Left ventricle myocardium inferior (tissue), 1 donor: ENCODE measurements at regions of chr5 and their contacts with region 1.

Region 1: GRCh38 chr5:170420780-170421412 is 31.7 kb upstream of the KCNMB1 start:
- DNase-seq: peak; percentile 26
- H3K4me3 ChIP-seq: no peak overlapping the region
- H3K27ac ChIP-seq: no peak overlapping the region
- H3K4me1 ChIP-seq: peaks cover 16% of the 10 kb centered on the region
- H3K27me3 ChIP-seq: peaks cover 28% of the 10 kb centered on the region
- CTCF ChIP-seq: peak; percentile 84

Region 2: GRCh38 chr5:170100066-170100943 is 320.6 kb before region 1 on chr5:
- intact Hi-C with region 1: loop called (anchors 10 kb)
- DNase-seq: peak; percentile 57
- H3K4me3 ChIP-seq: no peak overlapping the region
- H3K27ac ChIP-seq: no peak overlapping the region
- H3K4me1 ChIP-seq: no peaks in the 10 kb centered on the region
- H3K27me3 ChIP-seq: peaks cover 7% of the 10 kb centered on the region
- CTCF ChIP-seq: peak; percentile 70

Region 3: GRCh38 chr5:170225326-170226128 is 195.4 kb before region 1 on chr5:
- intact Hi-C with region 1: loop called (anchors 5 kb)
- DNase-seq: peak; percentile 64
- H3K4me3 ChIP-seq: no peak overlapping the region
- H3K27ac ChIP-seq: no peak overlapping the region
- H3K4me1 ChIP-seq: peaks cover 11% of the 10 kb centered on the region
- H3K27me3 ChIP-seq: no peaks in the 10 kb centered on the region
- CTCF ChIP-seq: peak; percentile 85

Region 4: DNA sequence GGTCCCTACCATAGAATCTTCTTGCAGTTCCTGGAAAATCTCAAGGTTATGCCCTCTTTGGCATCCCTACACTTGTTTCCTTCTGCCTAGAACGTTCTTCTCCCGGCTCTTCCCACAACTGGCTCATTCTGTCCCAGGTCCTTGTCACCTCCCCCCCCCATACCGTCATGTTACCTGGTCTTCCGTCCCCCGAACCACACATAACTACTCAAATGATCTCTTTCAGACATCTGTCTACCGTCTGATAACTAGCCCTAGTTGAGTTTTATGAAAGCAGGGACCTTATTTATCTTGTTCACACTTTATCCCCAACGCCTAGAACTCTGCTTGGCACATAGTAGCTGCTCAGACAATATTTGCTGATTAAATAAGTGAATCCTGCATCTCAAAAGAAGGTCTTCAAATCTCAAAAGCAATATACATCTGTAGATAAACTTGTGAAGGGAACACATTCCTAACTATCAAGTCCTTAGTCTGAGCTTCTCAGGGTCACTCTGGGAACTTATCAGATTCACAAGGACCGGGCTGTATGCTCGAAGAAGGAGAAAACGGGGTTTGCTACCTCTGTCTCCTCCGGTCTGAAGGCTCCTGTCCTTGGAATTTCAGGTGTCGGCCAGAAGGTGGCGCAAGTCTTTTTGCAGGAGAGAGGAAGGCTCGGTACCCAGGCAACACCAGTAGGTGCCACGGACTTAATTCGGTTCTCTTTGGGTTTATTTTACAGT is 153.3 kb before region 1 on chr5:
- intact Hi-C with region 1: loop called (anchors 10 kb)
- DNase-seq: peak; percentile 69
- H3K4me3 ChIP-seq: peak overlapping the region; percentile 28
- H3K27ac ChIP-seq: peak overlapping the region; percentile 48
- H3K4me1 ChIP-seq: peaks cover 24% of the 10 kb centered on the region
- H3K27me3 ChIP-seq: peaks cover 32% of the 10 kb centered on the region
- CTCF ChIP-seq: peak; percentile 86

Region 5: DNA sequence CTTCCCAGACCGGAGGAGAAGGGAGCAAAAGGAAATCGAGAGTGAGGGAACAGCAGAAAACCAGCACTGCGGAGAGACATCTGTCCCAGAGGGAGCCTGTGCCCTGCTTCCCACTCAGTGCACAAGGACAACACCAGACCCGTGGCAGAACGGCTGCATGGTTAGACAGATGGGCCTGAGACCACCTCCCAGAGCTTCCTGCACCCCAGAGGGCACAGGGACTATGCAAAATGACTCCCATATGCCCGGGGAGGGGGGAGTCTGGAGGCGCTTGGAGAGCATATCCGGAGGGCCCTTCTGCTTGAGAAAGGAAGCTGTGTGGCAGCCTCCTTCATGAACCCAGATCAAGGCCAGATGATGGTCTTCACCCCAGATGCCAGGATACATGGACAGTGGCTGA is 914.7 kb after region 1 on chr5:
- intact Hi-C with region 1: no loop called
- DNase-seq: no peak
- H3K4me3 ChIP-seq: no peak overlapping the region
- H3K27ac ChIP-seq: no peak overlapping the region
- H3K4me1 ChIP-seq: peaks cover 6% of the 10 kb centered on the region
- H3K27me3 ChIP-seq: peaks cover 99% of the 10 kb centered on the region
- CTCF ChIP-seq: no peak